GM12878 (cell line): ENCODE measurements at regions of chr5 and their contacts with region 1.

Region 1: GRCh38 chr5:88967633-88968585 is 84.9 kb upstream of the MEF2C start:
- DNase-seq: no peak
- ATAC-seq: no peak
- H3K4me3 ChIP-seq: no peak overlapping the region
- H3K27ac ChIP-seq: 0 out of 2 replicates have a peak overlapping the region, but pooled peaks have one; percentile 11
- H3K4me1 ChIP-seq: peaks cover 7% of the 10 kb centered on the region; the same call in 1 of the 2 replicates
- H3K27me3 ChIP-seq: no peaks in the 10 kb centered on the region
- CTCF ChIP-seq: no peak
- EP300 ChIP-seq: no peak
- POLR2A ChIP-seq: no peak
- RAD21 ChIP-seq: no peak

Region 2: GRCh38 chr5:88979244-88979643 is 11.3 kb after region 1 on chr5:
- CTCF ChIA-PET with region 1: interaction called, 10 read pairs
- POLR2A ChIA-PET with region 1: interaction called, 4 read pairs
- RAD21 ChIA-PET with region 1: interaction called, 3 read pairs
- SMC1A ChIA-PET with region 1: interaction called, 5 read pairs
- in situ Hi-C with region 1: no loop called
- intact Hi-C with region 1: no loop called
- DNase-seq: peak; percentile 34
- ATAC-seq: peak; percentile 82
- H3K4me3 ChIP-seq: no peak overlapping the region
- H3K27ac ChIP-seq: no peak overlapping the region
- H3K4me1 ChIP-seq: 0 out of 2 replicates have a peak, but pooled peaks cover 2% of the 10 kb centered on the region
- H3K27me3 ChIP-seq: no peaks in the 10 kb centered on the region
- CTCF ChIP-seq: no peak
- EP300 ChIP-seq: peak in 1 of 2 experiments; percentile 22; a peak in 1 of 4 replicates
- POLR2A ChIP-seq: no peak
- RAD21 ChIP-seq: 0 out of 2 replicates have a peak, but pooled peaks have one; percentile 9

Region 3: GRCh38 chr5:89638871-89639270 is 671.0 kb after region 1 on chr5:
- CTCF ChIA-PET with region 1: no interaction called
- POLR2A ChIA-PET with region 1: no interaction called
- RAD21 ChIA-PET with region 1: no interaction called
- SMC1A ChIA-PET with region 1: no interaction called
- in situ Hi-C with region 1: no loop called
- intact Hi-C with region 1: no loop called
- DNase-seq: no peak
- ATAC-seq: no peak
- H3K4me3 ChIP-seq: no peak overlapping the region
- H3K27ac ChIP-seq: no peak overlapping the region
- H3K4me1 ChIP-seq: no peaks in the 10 kb centered on the region
- H3K27me3 ChIP-seq: no peaks in the 10 kb centered on the region
- CTCF ChIP-seq: no peak
- EP300 ChIP-seq: no peak
- POLR2A ChIP-seq: no peak
- RAD21 ChIP-seq: no peak